Common myeloid progenitor, CD34-positive (primary cell): ENCODE measurements at regions of chr15 and their contacts with region 1.

Region 1: DNA sequence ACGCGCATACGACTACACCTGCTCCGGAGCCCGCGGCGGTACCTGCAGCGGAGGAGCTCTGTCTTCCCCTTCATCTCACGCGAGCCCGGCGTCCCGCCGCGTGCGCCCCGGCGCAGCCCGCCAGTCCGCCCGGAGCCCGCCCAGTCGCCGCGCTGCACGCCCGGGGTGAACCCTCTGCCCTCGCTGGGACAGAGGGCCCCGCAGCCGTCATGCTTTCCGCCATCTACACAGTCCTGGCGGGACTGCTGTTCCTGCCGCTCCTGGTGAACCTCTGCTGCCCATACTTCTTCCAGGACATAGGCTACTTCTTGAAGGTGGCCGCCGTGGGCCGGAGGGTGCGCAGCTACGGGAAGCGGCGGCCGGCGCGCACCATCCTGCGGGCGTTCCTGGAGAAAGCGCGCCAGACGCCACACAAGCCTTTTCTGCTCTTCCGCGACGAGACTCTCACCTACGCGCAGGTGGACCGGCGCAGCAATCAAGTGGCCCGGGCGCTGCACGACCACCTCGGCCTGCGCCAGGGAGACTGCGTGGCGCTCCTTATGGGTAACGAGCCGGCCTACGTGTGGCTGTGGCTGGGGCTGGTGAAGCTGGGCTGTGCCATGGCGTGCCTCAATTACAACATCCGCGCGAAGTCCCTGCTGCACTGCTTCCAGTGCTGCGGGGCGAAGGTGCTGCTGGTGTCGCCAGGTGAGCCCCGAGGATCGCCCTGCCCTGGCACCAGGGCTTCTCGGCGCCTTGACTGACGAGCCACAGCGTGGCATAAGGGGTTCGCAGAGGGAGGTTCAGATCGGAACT is 420 bp downstream of the SLC27A2 start:
- DNase-seq: peak; percentile 29 to 68 (median 49)
- H3K4me3 ChIP-seq: peak overlapping the region; percentile 53 to 86 (median 76)
- H3K27ac ChIP-seq: no peak overlapping the region
- H3K4me1 ChIP-seq: peaks cover 7 to 23% (median 20%) of the 10 kb centered on the region in 4 experiments
- H3K27me3 ChIP-seq: no peaks in the 10 kb centered on the region

Region 2: GRCh38 chr15:49962044-49962602 is 220.3 kb before region 1 on chr15:
- CTCF ChIA-PET with region 1: no interaction called
- POLR2A ChIA-PET with region 1: no interaction called
- DNase-seq: no peak
- H3K4me3 ChIP-seq: no peak overlapping the region
- H3K27ac ChIP-seq: no peak overlapping the region
- H3K4me1 ChIP-seq: no peaks in the 10 kb centered on the region
- H3K27me3 ChIP-seq: no peaks in the 10 kb centered on the region

Region 3: GRCh38 chr15:50315814-50316630 is 133.6 kb after region 1 on chr15:
- CTCF ChIA-PET with region 1: interaction called, 23 read pairs
- POLR2A ChIA-PET with region 1: interaction called, 3 read pairs
- DNase-seq: peak; percentile 58 to 75 (median 75)
- H3K4me3 ChIP-seq: no peak overlapping the region
- H3K27ac ChIP-seq: no peak overlapping the region
- H3K4me1 ChIP-seq: peaks cover 8 to 16% (median 12%) of the 10 kb centered on the region in 4 experiments
- H3K27me3 ChIP-seq: no peaks in the 10 kb centered on the region